MCF 10A (cell line): ENCODE measurements at regions of chr3 and their contacts with region 1.

Region 1: GRCh38 chr3:126911162-126912026 is 71.5 kb upstream of the PLXNA1 start:
- DNase-seq: peak; percentile 99
- H3K4me3 Mint-ChIP-seq: peak overlapping the region; percentile 6
- H3K27ac Mint-ChIP-seq: peak overlapping the region; percentile 94
- H3K4me1 Mint-ChIP-seq: peaks cover 34% of the 10 kb centered on the region
- H3K27me3 Mint-ChIP-seq: no peaks in the 10 kb centered on the region
- CTCF ChIP-seq: no peak

Region 2: DNA sequence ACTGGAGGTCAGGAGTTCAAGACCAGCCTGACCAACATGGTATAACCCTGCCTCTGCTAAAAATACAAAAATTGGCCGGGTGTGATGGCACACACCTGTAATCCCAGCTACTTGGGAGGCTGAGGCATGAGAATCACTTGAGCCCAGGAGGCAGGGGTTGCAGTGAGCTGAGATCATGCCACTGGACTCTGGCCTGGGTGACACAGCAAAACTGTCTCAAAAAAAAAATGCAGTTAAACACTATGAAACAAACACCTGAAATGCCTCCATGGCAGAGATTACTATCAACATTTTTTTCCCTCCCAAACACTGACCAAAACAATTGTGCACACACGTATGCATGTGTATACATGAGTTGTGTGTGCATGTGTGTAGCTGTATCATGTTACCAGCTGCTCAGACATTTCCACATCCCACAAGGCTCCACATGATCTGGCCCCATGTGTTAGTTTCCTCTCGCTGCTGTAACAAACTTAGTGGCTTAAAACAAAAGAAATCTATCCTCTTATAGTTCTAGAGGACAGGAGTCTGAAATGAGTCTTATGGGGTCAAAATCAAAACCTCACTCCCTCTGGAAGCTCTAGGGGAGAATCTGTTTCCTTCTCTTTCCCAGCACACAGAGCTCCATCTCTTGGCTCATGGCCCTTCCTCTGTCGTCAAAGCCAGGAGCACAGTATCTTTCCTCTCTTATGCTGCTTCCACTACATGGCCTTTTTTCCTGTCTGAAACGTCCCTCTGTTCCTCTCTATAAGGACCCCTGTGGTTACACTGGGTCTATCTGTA is 861.9 kb before region 1 on chr3:
- CTCF ChIA-PET with region 1: no interaction called
- POLR2A ChIA-PET with region 1: no interaction called
- intact Hi-C with region 1: no loop called
- DNase-seq: no peak
- H3K4me3 Mint-ChIP-seq: no peak overlapping the region
- H3K27ac Mint-ChIP-seq: no peak overlapping the region
- H3K4me1 Mint-ChIP-seq: peaks cover 11% of the 10 kb centered on the region
- H3K27me3 Mint-ChIP-seq: no peaks in the 10 kb centered on the region
- CTCF ChIP-seq: no peak

Region 3: DNA sequence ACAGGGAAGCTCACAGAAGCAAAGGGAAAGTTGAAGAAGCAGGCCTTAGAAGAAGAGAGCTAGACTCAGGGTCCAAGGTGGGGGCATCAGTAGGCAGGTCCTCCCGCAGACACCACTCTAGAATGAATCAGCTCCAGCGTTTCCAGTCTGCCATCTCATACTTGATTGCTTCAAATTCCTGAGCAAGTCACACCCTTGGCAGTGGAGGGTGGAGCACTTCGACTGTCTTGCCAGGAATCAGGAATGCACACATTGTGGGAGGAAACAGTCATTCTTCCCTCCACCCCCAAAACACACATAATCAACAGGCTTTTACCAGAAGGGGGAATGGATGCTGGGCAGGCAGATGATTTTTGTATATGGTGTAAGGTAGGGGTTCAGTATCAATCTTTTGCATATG is 128.8 kb before region 1 on chr3:
- CTCF ChIA-PET with region 1: interaction called, 3 read pairs
- POLR2A ChIA-PET with region 1: no interaction called
- intact Hi-C with region 1: loop called (anchors 1 kb)
- DNase-seq: peak; percentile 94
- H3K4me3 Mint-ChIP-seq: peak overlapping the region; percentile 48
- H3K27ac Mint-ChIP-seq: peak overlapping the region; percentile 97
- H3K4me1 Mint-ChIP-seq: peaks cover 51% of the 10 kb centered on the region
- H3K27me3 Mint-ChIP-seq: no peaks in the 10 kb centered on the region
- CTCF ChIP-seq: no peak

Region 4: GRCh38 chr3:126895178-126896066 is 16.0 kb before region 1 on chr3:
- CTCF ChIA-PET with region 1: no interaction called
- POLR2A ChIA-PET with region 1: interaction called, 14 read pairs
- intact Hi-C with region 1: no loop called
- DNase-seq: peak; percentile 97
- H3K4me3 Mint-ChIP-seq: no peak overlapping the region
- H3K27ac Mint-ChIP-seq: no peak overlapping the region
- H3K4me1 Mint-ChIP-seq: peaks cover 48% of the 10 kb centered on the region
- H3K27me3 Mint-ChIP-seq: no peaks in the 10 kb centered on the region
- CTCF ChIP-seq: no peak

Region 5: DNA sequence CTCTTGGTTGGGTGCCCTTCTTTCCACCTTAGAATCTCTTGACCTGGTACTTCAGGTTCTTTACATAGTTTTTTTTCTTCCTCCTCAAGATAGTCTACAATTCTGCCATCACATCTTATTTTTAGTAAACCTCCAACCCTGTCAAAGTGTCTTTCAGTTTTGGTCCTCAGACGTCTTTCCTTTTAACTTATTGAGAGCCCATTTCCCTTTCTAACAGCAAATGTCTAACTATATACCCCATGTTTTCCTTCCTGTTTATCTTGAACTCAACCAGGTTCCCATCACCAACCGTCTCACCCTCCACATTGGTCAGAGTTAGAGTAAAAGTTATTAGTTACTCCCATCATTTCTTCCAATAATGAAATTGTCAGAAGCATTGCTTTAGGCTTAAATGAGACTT is 1014.0 kb after region 1 on chr3:
- CTCF ChIA-PET with region 1: no interaction called
- POLR2A ChIA-PET with region 1: no interaction called
- intact Hi-C with region 1: no loop called
- DNase-seq: no peak
- H3K4me3 Mint-ChIP-seq: no peak overlapping the region
- H3K27ac Mint-ChIP-seq: no peak overlapping the region
- H3K4me1 Mint-ChIP-seq: peaks cover 6% of the 10 kb centered on the region
- H3K27me3 Mint-ChIP-seq: peaks cover 11% of the 10 kb centered on the region
- CTCF ChIP-seq: no peak